Head of caudate nucleus (tissue), 42 donors: ENCODE measurements at regions of chr5 and their contacts with region 1.

Region 1: GRCh38 chr5:140372971-140373487 is 13.0 kb downstream of the SLC4A9 start:
- DNase-seq: peak; percentile 33 to 87 (median 72)

Region 2: GRCh38 chr5:139955053-139955605 is 417.9 kb before region 1 on chr5:
- intact Hi-C with region 1: no loop called
- DNase-seq: peak in 1 of 42 donors; percentile 17

Region 3: GRCh38 chr5:140647042-140647341 is 274.0 kb after region 1 on chr5:
- intact Hi-C with region 1: loop called (anchors 10 kb)
- DNase-seq: no peak